CD8-positive, alpha-beta memory T cell (primary cell): ENCODE measurements at regions of chr3 and their contacts with region 1.

Region 1: GRCh38 chr3:43296565-43296964 is 10.2 kb downstream of the SNRK start:
- DNase-seq: peak; percentile 40 to 84 (median 74)
- H3K4me3 ChIP-seq: peak overlapping the region; percentile 13
- H3K4me3 Mint-ChIP-seq: peak overlapping the region; percentile 70 to 83 (median 81)
- H3K27ac ChIP-seq: no peak overlapping the region
- H3K27ac Mint-ChIP-seq: peak overlapping the region; percentile 72 to 97 (median 92)
- H3K4me1 ChIP-seq: peaks cover 86% of the 10 kb centered on the region
- H3K4me1 Mint-ChIP-seq: peaks cover 82 to 99% (median 97%) of the 10 kb centered on the region in 3 donors
- H3K27me3 ChIP-seq: no peaks in the 10 kb centered on the region
- H3K27me3 Mint-ChIP-seq: no peaks in the 10 kb centered on the region

Region 2: DNA sequence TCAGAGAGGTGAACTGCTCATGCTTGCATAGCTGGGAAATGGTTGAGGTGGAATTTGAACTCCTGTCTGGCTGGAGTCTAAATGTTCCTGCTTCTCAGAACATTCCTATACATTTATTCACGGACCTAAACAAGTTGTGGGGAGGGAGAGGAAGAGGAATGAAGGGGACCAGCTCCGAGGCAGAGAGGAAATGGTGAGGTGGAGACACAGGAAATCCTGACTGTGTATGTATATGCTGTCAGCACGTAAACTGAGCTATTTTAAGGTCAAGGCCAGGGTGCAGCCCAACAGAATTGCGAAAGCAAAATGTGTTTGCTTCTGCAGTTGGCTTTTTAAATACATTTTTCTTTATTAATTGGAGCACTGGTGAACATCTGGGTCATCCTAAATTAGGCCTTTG is 116.5 kb before region 1 on chr3:
- CTCF ChIA-PET with region 1: no interaction called
- POLR2A ChIA-PET with region 1: interaction called, 11 read pairs
- DNase-seq: peak in 4 of 5 donors; percentile 22 to 62 (median 52)
- H3K4me3 ChIP-seq: peak overlapping the region; percentile 33
- H3K4me3 Mint-ChIP-seq: peak overlapping the region; percentile 31 to 78 (median 76)
- H3K27ac ChIP-seq: peak overlapping the region; percentile 15
- H3K27ac Mint-ChIP-seq: peak overlapping the region; percentile 84 to 97 (median 95)
- H3K4me1 ChIP-seq: peaks cover 40% of the 10 kb centered on the region
- H3K4me1 Mint-ChIP-seq: peaks cover 52 to 65% (median 64%) of the 10 kb centered on the region in 3 donors
- H3K27me3 ChIP-seq: no peaks in the 10 kb centered on the region
- H3K27me3 Mint-ChIP-seq: peaks cover 0 to 1% of the 10 kb centered on the region in 2 donors

Region 3: GRCh38 chr3:43286115-43286840 is 10.3 kb before region 1 on chr3 and contains the start of gene SNRK:
- CTCF ChIA-PET with region 1: interaction called, 7 read pairs
- POLR2A ChIA-PET with region 1: interaction called, 29 read pairs
- DNase-seq: peak; percentile 89 to 94 (median 90)
- H3K4me3 ChIP-seq: peak within 1 kb of the TSS; percentile 94
- H3K4me3 Mint-ChIP-seq: peak within 1 kb of the TSS; percentile 98 to 100 (median 99)
- H3K27ac ChIP-seq: peak within 1 kb of the TSS; percentile 82
- H3K27ac Mint-ChIP-seq: peak within 1 kb of the TSS; percentile 99 to 100 (median 100)
- H3K4me1 ChIP-seq: peaks cover 32% of the 10 kb centered on the region
- H3K4me1 Mint-ChIP-seq: peaks cover 32 to 38% (median 36%) of the 10 kb centered on the region in 3 donors
- H3K27me3 ChIP-seq: no peaks in the 10 kb centered on the region
- H3K27me3 Mint-ChIP-seq: peaks cover 0 to 1% of the 10 kb centered on the region in 2 donors
- total RNA-seq, gene SNRK: 34.2 to 35.9 TPM

Region 4: GRCh38 chr3:43345877-43346276 is 49.3 kb after region 1 on chr3:
- CTCF ChIA-PET with region 1: interaction called, 21 read pairs
- POLR2A ChIA-PET with region 1: interaction called, 14 read pairs
- DNase-seq: no peak
- H3K4me3 ChIP-seq: no peak overlapping the region
- H3K4me3 Mint-ChIP-seq: peak overlapping the region; percentile 29 to 88 (median 59)
- H3K27ac ChIP-seq: no peak overlapping the region
- H3K27ac Mint-ChIP-seq: peak overlapping the region; percentile 90 to 99 (median 96)
- H3K4me1 ChIP-seq: peaks cover 80% of the 10 kb centered on the region
- H3K4me1 Mint-ChIP-seq: peaks cover 80 to 93% (median 89%) of the 10 kb centered on the region in 3 donors
- H3K27me3 ChIP-seq: no peaks in the 10 kb centered on the region
- H3K27me3 Mint-ChIP-seq: peaks cover 0 to 2% of the 10 kb centered on the region in 2 donors

Region 5: DNA sequence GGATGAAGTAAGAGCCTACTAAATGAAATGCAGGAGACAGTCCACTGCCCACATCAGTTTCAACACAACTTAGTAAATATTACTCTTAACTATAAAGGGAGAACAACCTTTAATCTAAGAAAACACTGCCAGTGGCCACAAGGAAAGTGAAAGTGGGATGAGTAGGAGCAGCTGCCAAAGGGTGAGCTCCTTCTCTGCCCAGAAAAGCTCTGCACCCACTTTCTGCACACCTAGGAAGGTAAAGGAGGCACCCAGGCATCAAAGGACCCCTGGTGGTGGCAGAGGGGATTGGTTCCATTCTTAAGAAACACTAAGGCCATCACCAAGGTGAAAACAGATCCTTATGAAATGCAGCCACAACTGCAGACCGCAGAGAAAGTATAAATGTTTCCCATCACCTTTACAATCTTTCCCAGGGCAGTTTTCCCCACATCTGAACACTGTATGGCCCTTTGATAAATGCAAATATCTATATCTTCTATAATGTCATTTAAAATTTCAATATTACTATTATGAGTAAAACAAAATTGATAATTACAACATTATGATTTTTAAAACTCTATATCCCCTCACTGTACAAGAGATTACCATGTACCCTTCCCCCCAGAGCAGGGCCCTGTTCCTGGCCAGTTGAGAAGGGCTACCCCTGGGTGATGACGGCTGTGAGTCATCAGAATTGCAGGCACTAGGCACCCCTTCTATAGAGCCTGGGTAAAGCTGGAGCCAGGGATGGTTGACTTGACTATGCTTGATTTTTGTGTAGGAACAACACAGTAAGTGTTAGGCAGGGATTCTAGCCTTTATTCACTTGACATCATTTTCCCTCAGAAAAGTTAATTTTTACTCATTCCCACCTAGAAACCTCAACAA is 81.7 kb after region 1 on chr3:
- CTCF ChIA-PET with region 1: interaction called, 11 read pairs
- POLR2A ChIA-PET with region 1: no interaction called
- DNase-seq: peak; percentile 47 to 82 (median 62)
- H3K4me3 ChIP-seq: no peak overlapping the region
- H3K4me3 Mint-ChIP-seq: peak overlapping the region in 3 of 7 donors; percentile 2 to 45 (median 20)
- H3K27ac ChIP-seq: no peak overlapping the region
- H3K27ac Mint-ChIP-seq: peak overlapping the region; percentile 3 to 85 (median 62)
- H3K4me1 ChIP-seq: peaks cover 8% of the 10 kb centered on the region
- H3K4me1 Mint-ChIP-seq: peaks cover 18 to 33% (median 25%) of the 10 kb centered on the region in 3 donors
- H3K27me3 ChIP-seq: no peaks in the 10 kb centered on the region
- H3K27me3 Mint-ChIP-seq: peaks cover 0 to 1% of the 10 kb centered on the region in 2 donors

Region 6: GRCh38 chr3:43455233-43455632 is 158.7 kb after region 1 on chr3:
- CTCF ChIA-PET with region 1: no interaction called
- POLR2A ChIA-PET with region 1: no interaction called
- DNase-seq: no peak
- H3K4me3 ChIP-seq: no peak overlapping the region
- H3K4me3 Mint-ChIP-seq: no peak overlapping the region
- H3K27ac ChIP-seq: no peak overlapping the region
- H3K27ac Mint-ChIP-seq: no peak overlapping the region
- H3K4me1 ChIP-seq: peaks cover 10% of the 10 kb centered on the region
- H3K4me1 Mint-ChIP-seq: peaks cover 13 to 16% (median 16%) of the 10 kb centered on the region in 3 donors
- H3K27me3 ChIP-seq: no peaks in the 10 kb centered on the region
- H3K27me3 Mint-ChIP-seq: peaks cover 0 to 2% of the 10 kb centered on the region in 2 donors